H1 (cell line): ENCODE measurements at regions of chr3 and their contacts with region 1.

Region 1: GRCh38 chr3:134677196-134677986 is 26.6 kb upstream of the KY start:
- DNase-seq: peak; percentile 38 to 79
- H3K4me3 ChIP-seq: no peak overlapping the region
- H3K27ac ChIP-seq: no peak overlapping the region
- H3K4me1 ChIP-seq: no peaks in the 10 kb centered on the region
- H3K27me3 ChIP-seq: peaks cover 0 to 2% (median 0%) of the 10 kb centered on the region in 4 experiments; a peak in 3 of 7 replicates
- CTCF ChIP-seq: peak; percentile 95 to 97 (median 97)
- EP300 ChIP-seq: no peak
- POLR2A ChIP-seq: no peak
- RAD21 ChIP-seq: peak; percentile 66 to 76

Region 2: DNA sequence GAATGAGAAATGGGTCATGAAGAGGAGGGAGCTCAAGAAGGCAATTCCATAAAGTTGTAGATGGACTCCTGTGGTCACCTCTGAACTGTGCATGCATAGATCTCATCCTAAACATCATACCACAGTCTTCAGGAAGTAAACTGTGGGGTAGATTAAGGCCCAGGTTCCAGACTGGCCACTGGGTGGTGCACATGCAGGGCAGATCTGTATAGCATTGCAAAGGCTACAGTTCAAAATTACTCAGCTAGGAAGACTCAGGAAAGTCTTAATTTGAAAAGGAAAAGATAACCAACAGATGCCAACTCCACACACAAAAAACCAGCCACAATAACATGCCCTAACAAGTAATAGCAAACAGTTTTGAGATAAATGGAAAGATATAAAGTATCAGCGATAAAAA is 46.9 kb before region 1 on chr3:
- CTCF ChIA-PET with region 1: interaction called, 10 read pairs
- POLR2A ChIA-PET with region 1: no interaction called
- DNase-seq: peak in 1 of 2 experiments; percentile 35
- H3K4me3 ChIP-seq: no peak overlapping the region
- H3K27ac ChIP-seq: no peak overlapping the region
- H3K4me1 ChIP-seq: no peaks in the 10 kb centered on the region
- H3K27me3 ChIP-seq: no peaks in the 10 kb centered on the region
- CTCF ChIP-seq: peak; percentile 48 to 57 (median 49)
- EP300 ChIP-seq: no peak
- POLR2A ChIP-seq: no peak
- RAD21 ChIP-seq: peak; percentile 45 to 53

Region 3: DNA sequence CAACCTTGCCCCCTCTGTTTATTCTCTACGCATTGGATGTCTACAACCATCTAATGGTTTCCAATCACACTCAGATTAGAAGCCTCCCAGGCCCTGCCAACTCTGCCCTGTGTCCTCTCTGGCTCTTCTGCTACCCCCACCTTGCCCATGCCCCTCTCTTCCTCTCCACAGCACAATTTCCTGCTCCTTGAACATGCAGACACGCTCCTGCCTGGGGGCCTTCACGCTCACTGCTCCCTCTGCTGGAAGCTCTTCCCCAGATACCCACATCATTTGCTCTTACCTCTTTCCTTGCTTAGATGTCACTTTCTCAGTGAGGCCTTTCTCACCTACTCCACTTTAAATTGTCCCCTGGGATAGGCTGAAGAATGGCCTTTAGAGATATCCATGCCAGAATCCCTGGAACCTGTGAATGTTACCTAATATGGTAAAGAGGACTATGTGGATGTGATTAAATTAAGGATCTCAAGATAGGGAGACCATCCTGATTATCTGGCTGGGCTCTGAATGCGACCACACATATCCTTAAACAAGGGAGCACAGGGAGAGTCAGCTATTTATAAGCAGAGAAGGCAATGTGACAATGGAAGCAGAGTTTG is 36.4 kb before region 1 on chr3:
- CTCF ChIA-PET with region 1: interaction called, 11 read pairs
- POLR2A ChIA-PET with region 1: no interaction called
- DNase-seq: peak in 1 of 2 experiments; percentile 57
- H3K4me3 ChIP-seq: no peak overlapping the region
- H3K27ac ChIP-seq: no peak overlapping the region
- H3K4me1 ChIP-seq: peaks cover 0 to 11% (median 5%) of the 10 kb centered on the region in 4 experiments; a peak in 3 of 7 replicates
- H3K27me3 ChIP-seq: peaks cover 0 to 5% (median 3%) of the 10 kb centered on the region in 4 experiments; a peak in 4 of 7 replicates
- CTCF ChIP-seq: peak; percentile 73 to 77 (median 73)
- EP300 ChIP-seq: no peak
- POLR2A ChIP-seq: no peak
- RAD21 ChIP-seq: peak; percentile 53 to 62

Region 4: GRCh38 chr3:134650431-134651346 is 26.7 kb before region 1 on chr3 and contains the start of gene KY:
- CTCF ChIA-PET with region 1: interaction called, 38 read pairs
- POLR2A ChIA-PET with region 1: no interaction called
- DNase-seq: peak; percentile 33 to 80
- H3K4me3 ChIP-seq: peak within 1 kb of the TSS; percentile 30 to 53 (median 42)
- H3K27ac ChIP-seq: no peak within 1 kb of the TSS
- H3K4me1 ChIP-seq: peaks cover 0 to 6% (median 2%) of the 10 kb centered on the region in 4 experiments; a peak in 5 of 7 replicates
- H3K27me3 ChIP-seq: peaks cover 57 to 99% (median 89%) of the 10 kb centered on the region in 4 experiments
- CTCF ChIP-seq: peak in 2 of 3 experiments; percentile 0 to 2; a peak in 2 of 4 replicates
- EP300 ChIP-seq: no peak
- POLR2A ChIP-seq: no peak
- RAD21 ChIP-seq: no peak
- total RNA-seq, gene KY: not detected in 2 replicates

Region 5: DNA sequence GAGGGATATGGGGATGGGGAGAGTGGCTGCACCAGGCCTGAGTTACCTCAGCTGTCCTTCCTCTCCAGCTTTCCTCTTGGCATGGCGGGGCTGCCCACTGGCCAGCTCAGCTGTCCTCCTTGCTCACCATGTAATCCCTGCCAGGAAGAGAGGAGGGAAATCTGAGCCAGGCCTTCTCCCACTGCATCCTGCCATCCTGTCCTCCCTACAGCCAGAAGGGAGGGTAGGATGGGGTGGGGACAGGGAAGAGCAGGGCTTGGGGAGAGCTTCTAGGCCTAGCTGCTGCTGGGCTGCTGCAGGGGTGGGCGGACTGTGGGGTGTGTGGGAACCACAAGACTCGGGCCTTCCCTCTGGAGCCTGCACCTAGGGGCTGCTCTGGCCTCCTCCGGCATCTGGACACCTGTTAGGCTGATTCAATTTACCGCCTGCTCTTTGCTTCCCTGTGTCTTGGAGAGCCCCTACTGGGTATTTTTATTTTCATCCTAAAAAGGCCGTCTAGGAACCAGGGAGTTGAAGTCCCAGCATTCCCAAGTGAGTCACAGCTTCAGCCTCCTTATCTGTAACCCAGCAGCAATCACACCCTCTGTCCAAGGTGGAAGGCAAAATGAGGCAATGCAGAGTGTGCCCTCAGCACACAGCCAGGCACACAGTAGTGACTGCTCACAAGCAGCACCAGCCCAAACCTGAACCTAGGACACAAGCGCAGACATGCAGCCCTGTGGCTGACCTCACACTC is 13.5 kb before region 1 on chr3:
- CTCF ChIA-PET with region 1: interaction called, 29 read pairs
- POLR2A ChIA-PET with region 1: no interaction called
- DNase-seq: no peak
- H3K4me3 ChIP-seq: no peak overlapping the region
- H3K27ac ChIP-seq: no peak overlapping the region
- H3K4me1 ChIP-seq: peaks cover 0 to 5% (median 3%) of the 10 kb centered on the region in 4 experiments; a peak in 3 of 7 replicates
- H3K27me3 ChIP-seq: peaks cover 0 to 2% (median 0%) of the 10 kb centered on the region in 4 experiments; a peak in 2 of 7 replicates
- CTCF ChIP-seq: no peak
- EP300 ChIP-seq: no peak
- POLR2A ChIP-seq: no peak
- RAD21 ChIP-seq: no peak

Region 6: DNA sequence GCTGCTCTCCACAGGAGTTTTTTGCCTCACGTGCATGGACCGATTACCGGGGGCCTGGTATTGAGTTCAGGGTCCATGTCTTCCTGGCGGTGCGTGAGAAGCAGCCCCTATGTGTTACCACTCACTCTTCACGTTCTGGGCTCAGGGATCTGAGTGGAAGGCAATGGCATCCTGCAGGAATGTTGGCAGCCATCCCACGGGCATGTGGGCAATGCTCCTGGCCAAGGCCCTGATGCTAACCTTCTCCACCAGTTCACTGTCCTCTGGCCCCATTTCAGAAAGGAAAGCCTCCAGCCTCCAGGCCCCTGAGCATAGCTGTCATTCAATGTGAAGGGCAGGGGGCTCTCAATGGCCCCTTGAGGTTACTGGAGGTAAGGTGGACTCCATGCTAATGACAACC is 16.4 kb after region 1 on chr3:
- CTCF ChIA-PET with region 1: interaction called, 57 read pairs
- POLR2A ChIA-PET with region 1: no interaction called
- DNase-seq: no peak
- H3K4me3 ChIP-seq: no peak overlapping the region
- H3K27ac ChIP-seq: no peak overlapping the region
- H3K4me1 ChIP-seq: peaks cover 0 to 5% (median under 1%) of the 10 kb centered on the region in 4 experiments; a peak in 1 of 7 replicates
- H3K27me3 ChIP-seq: peaks cover 30 to 51% (median 39%) of the 10 kb centered on the region in 4 experiments; a peak in 6 of 7 replicates
- CTCF ChIP-seq: no peak
- EP300 ChIP-seq: no peak
- POLR2A ChIP-seq: no peak
- RAD21 ChIP-seq: no peak